ENCODE measurements at regions of chr19 and their contacts with region 1.

Region 1: GRCh38 chr19:1478934-1479707 is at the start of gene C19orf25:
- DNase-seq: peak; percentile 81 to 94 (median 88)
- ATAC-seq: peak; percentile 98
- H3K4me3 ChIP-seq: peak within 1 kb of the TSS; percentile 82
- H3K4me3 Mint-ChIP-seq: peak within 1 kb of the TSS; percentile 96 to 100 (median 98)
- H3K27ac ChIP-seq: peak within 1 kb of the TSS; percentile 86
- H3K27ac Mint-ChIP-seq: peak within 1 kb of the TSS; percentile 94 to 98 (median 96)
- H3K4me1 ChIP-seq: peaks cover 6 to 12% of the 10 kb centered on the region in 2 donors
- H3K4me1 Mint-ChIP-seq: peaks cover 11 to 24% (median 15%) of the 10 kb centered on the region in 7 donors
- H3K27me3 ChIP-seq: no peaks in the 10 kb centered on the region
- H3K27me3 Mint-ChIP-seq: peaks cover 0 to 3% (median 0%) of the 10 kb centered on the region in 5 donors
- total RNA-seq, gene C19orf25: 24.2 to 64.5 (median 44.6) TPM

Region 2: GRCh38 chr19:1312767-1313694 is 166.1 kb before region 1 on chr19:
- CTCF ChIA-PET with region 1: no interaction called
- POLR2A ChIA-PET with region 1: no interaction called
- intact Hi-C with region 1: no loop called
- DNase-seq: no peak
- ATAC-seq: no peak
- H3K4me3 ChIP-seq: no peak overlapping the region
- H3K4me3 Mint-ChIP-seq: no peak overlapping the region
- H3K27ac ChIP-seq: no peak overlapping the region
- H3K27ac Mint-ChIP-seq: no peak overlapping the region
- H3K4me1 ChIP-seq: peaks cover 0 to 3% of the 10 kb centered on the region in 2 donors
- H3K4me1 Mint-ChIP-seq: peaks cover 0 to 5% (median 0%) of the 10 kb centered on the region in 7 donors
- H3K27me3 ChIP-seq: peaks cover 0 to 10% of the 10 kb centered on the region in 2 donors
- H3K27me3 Mint-ChIP-seq: peaks cover 9 to 18% (median 12%) of the 10 kb centered on the region in 5 donors

Region 3: GRCh38 chr19:1438035-1438932 is 40.8 kb before region 1 on chr19 and contains the start of gene RPS15:
- CTCF ChIA-PET with region 1: no interaction called
- POLR2A ChIA-PET with region 1: no interaction called
- intact Hi-C with region 1: loop called (anchors 1 to 2 kb)
- DNase-seq: peak; percentile 92 to 98 (median 96)
- ATAC-seq: peak; percentile 97
- H3K4me3 ChIP-seq: peak within 1 kb of the TSS; percentile 82
- H3K4me3 Mint-ChIP-seq: peak within 1 kb of the TSS; percentile 87 to 99 (median 98)
- H3K27ac ChIP-seq: peak within 1 kb of the TSS; percentile 92
- H3K27ac Mint-ChIP-seq: peak within 1 kb of the TSS; percentile 96 to 100 (median 99)
- H3K4me1 ChIP-seq: peaks cover 8 to 11% of the 10 kb centered on the region in 2 donors
- H3K4me1 Mint-ChIP-seq: peaks cover 9 to 34% (median 15%) of the 10 kb centered on the region in 7 donors
- H3K27me3 ChIP-seq: no peaks in the 10 kb centered on the region
- H3K27me3 Mint-ChIP-seq: no peaks in the 10 kb centered on the region
- total RNA-seq, gene RPS15: 1,300 to 2,097 (median 2,012) TPM

Region 4: GRCh38 chr19:1507763-1508509 is 28.8 kb after region 1 on chr19:
- CTCF ChIA-PET with region 1: no interaction called
- POLR2A ChIA-PET with region 1: no interaction called
- intact Hi-C with region 1: loop called in 1 of 2 experiments (anchors 1 kb)
- DNase-seq: peak; percentile 76 to 96 (median 94)
- ATAC-seq: peak; percentile 97
- H3K4me3 ChIP-seq: peak overlapping the region; percentile 48
- H3K4me3 Mint-ChIP-seq: peak overlapping the region; percentile 75 to 92 (median 86)
- H3K27ac ChIP-seq: peak overlapping the region; percentile 79
- H3K27ac Mint-ChIP-seq: peak overlapping the region; percentile 87 to 96 (median 92)
- H3K4me1 ChIP-seq: peaks cover 4 to 18% of the 10 kb centered on the region in 2 donors
- H3K4me1 Mint-ChIP-seq: peaks cover 7 to 41% (median 27%) of the 10 kb centered on the region in 7 donors
- H3K27me3 ChIP-seq: peaks cover 0 to 2% of the 10 kb centered on the region in 2 donors
- H3K27me3 Mint-ChIP-seq: peaks cover 0 to 41% (median 2%) of the 10 kb centered on the region in 5 donors

Measured in naive thymus-derived CD4-positive, alpha-beta T cell (primary cell).